OCI-LY7 (cell line): ENCODE measurements at regions of chr10 and their contacts with region 1.

Region 1: GRCh38 chr10:68301790-68302502 is 29.9 kb upstream of the HNRNPH3 start:
- DNase-seq: peak; percentile 87
- H3K4me3 ChIP-seq: peak overlapping the region; percentile 50
- H3K27ac ChIP-seq: peak overlapping the region; percentile 99
- H3K4me1 ChIP-seq: peaks cover 49% of the 10 kb centered on the region
- CTCF ChIP-seq: peak; percentile 93

Region 2: GRCh38 chr10:68074775-68075549 is 227.0 kb before region 1 on chr10 and contains the start of gene HERC4:
- CTCF ChIA-PET with region 1: no interaction called
- POLR2A ChIA-PET with region 1: interaction called, 3 read pairs
- intact Hi-C with region 1: loop called (anchors 2 kb)
- DNase-seq: peak; percentile 91
- H3K4me3 ChIP-seq: peak within 1 kb of the TSS; percentile 85
- H3K27ac ChIP-seq: peak within 1 kb of the TSS; percentile 83
- H3K4me1 ChIP-seq: peaks cover 15% of the 10 kb centered on the region
- CTCF ChIP-seq: no peak
- total RNA-seq, gene HERC4: 34.2 and 36.1 TPM in 2 replicates

Region 3: DNA sequence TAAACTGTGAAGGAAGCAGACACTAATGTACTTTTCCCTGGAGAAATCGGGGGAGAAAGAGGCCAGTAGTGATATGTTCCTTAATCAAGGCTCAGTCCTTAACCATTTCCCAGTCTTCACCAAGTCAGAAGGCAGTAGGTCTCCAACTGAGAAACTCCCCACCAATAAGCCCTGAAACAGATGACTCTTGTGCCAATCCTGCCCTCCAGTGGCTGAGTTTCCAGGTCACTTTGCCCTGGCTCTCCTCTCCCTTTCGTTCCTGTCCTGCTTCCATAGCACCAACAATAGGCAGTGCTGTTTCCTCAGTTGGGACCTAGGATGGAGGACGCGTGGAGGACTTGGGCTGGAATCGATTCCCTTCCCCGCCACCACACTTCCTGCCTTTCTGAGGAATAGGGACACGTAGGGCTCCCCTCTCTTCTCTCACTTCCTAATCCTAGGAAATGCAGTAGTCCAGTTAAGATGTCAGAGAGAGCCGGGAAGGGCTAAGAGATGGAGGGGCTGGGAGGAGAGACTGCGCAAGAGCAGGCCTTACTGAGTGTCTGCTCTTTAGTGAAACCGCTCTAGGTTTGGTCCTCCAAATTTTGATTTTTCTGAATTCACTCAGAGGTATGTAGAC is 93.4 kb before region 1 on chr10:
- CTCF ChIA-PET with region 1: interaction called, 27 read pairs
- POLR2A ChIA-PET with region 1: interaction called, 75 read pairs
- intact Hi-C with region 1: loop called (anchors 1 kb)
- DNase-seq: peak; percentile 70
- H3K4me3 ChIP-seq: no peak overlapping the region
- H3K27ac ChIP-seq: no peak overlapping the region
- H3K4me1 ChIP-seq: peaks cover 18% of the 10 kb centered on the region
- CTCF ChIP-seq: peak; percentile 79

Region 4: DNA sequence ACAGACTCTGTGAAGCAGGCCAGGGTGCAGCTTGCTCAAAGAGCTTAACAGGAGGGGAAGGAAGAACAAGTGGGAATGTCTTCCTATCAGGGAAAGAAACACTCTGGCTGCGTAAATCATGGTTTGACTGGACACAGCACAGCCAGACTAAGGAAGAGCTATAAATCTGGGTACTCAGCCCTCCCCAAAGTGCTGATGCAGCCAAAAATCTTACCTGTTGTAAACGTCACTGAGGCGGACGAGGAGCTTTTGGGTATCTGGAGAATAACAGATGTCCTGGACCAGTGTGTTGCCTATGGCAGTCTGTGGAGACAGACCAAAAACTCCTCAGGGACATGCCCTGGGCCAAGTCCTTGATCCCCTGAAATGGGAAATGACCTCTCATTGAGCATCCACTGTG is 13.2 kb before region 1 on chr10:
- CTCF ChIA-PET with region 1: no interaction called
- POLR2A ChIA-PET with region 1: interaction called, 18 read pairs
- intact Hi-C with region 1: no loop called
- DNase-seq: no peak
- H3K4me3 ChIP-seq: no peak overlapping the region
- H3K27ac ChIP-seq: no peak overlapping the region
- H3K4me1 ChIP-seq: peaks cover 12% of the 10 kb centered on the region
- CTCF ChIP-seq: no peak